Body of pancreas (tissue), 4 donors: ENCODE measurements at regions of chr11 and their contacts with region 1.

Region 1: DNA sequence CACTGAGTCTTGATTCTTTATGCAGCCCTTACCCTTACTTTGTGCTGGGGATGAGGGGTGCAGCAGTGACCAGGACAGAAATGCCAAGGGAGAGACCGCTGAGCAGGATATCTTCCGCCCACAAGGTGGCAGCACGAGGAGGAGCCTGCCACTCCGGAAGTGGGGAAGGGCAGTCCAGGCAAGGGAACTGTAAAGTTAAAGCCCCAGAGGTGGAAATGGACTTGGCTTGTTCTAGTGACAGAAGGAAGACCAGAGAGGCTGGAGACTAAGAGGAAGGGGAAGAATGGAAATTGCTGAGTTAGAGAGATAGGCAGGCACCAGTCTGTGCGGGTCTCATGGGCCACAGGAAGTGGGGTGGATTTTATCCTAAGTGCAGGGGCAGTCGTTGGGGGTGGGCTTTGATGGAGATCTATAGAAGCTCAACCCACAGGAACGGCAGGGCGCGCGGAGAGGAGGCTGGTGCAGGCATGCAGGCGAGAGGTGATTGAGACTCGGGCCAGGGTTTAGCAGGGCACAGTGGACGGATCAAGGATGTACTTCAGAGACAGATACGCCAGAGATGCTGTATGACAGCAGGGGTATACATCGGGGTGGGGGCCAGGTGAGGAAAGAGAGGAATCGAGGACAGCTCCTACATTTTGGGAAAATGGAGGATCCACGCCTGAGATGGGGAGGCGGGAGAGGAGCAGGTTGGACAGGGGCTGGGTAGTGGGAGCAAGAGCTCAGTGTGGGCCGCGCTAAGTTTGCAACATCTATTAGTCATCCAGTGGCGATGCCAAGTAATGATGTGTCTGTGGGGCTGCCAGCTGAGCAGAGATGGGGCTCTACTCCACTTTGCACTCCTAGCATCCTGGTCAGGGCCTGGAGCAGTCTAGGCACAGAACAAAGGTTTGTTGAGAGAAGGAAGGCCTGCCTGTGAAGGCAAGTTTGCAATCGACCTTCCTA is 3.3 kb upstream of the GRK2 start:
- DNase-seq: peak; percentile 85 to 88 (median 86)
- ATAC-seq: peak; percentile 54
- H3K4me3 ChIP-seq: no peak overlapping the region
- H3K27ac ChIP-seq: peak overlapping the region in 3 of 4 donors; percentile 13 to 57 (median 46)
- H3K4me1 ChIP-seq: peaks cover 33% of the 10 kb centered on the region
- H3K27me3 ChIP-seq: no peaks in the 10 kb centered on the region
- CTCF ChIP-seq: peak; percentile 76 to 92 (median 88)
- POLR2A ChIP-seq: peak in 1 of 3 donors; percentile 29

Region 2: DNA sequence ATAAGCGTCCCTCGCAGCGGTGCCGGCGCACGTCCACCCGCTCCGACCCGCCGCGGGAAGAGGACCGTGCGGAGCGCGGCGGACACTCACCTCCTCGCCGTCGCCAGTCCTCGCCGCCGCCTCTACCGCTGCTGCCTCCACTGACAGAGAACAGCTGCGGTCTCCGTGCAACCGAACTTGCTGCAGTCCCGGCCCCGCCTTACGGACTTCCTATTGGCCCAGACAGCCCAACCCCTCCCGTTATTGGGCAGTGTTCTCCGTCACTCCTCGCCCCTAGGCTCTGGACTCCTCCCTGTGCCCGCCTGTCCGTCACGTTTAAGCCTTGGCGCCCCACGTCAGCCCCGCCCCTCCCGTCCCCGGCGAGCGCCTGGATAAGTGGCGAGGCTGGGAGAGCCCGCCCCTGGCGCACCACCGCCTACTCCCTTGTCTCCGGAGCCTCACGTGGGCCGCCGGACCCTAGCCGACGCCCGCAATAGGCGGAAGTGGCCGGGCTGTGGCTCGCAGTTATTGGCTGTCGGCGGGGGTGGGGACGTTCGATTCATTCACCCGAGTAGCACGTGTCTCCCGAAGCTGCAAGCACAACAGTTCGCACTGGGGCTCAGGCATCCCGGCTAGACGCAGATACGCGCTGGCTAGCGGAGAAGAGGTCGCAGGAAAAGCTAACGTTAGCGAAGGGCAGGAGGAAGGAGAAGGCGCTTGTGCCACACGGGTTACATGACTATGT is 304.6 kb before region 1 on chr11 and contains the start of gene PC:
- intact Hi-C with region 1: no loop called
- DNase-seq: peak; percentile 99 to 100 (median 99)
- ATAC-seq: peak; percentile 96
- H3K4me3 ChIP-seq: no peak within 1 kb of the TSS
- H3K27ac ChIP-seq: peak within 1 kb of the TSS in 3 of 4 donors; percentile 33 to 84 (median 80)
- H3K4me1 ChIP-seq: peaks cover 24% of the 10 kb centered on the region
- H3K27me3 ChIP-seq: no peaks in the 10 kb centered on the region
- CTCF ChIP-seq: no peak
- POLR2A ChIP-seq: peak; percentile 75 to 90 (median 89)
- total RNA-seq, gene PC: 12.2 to 81.7 TPM

Region 3: DNA sequence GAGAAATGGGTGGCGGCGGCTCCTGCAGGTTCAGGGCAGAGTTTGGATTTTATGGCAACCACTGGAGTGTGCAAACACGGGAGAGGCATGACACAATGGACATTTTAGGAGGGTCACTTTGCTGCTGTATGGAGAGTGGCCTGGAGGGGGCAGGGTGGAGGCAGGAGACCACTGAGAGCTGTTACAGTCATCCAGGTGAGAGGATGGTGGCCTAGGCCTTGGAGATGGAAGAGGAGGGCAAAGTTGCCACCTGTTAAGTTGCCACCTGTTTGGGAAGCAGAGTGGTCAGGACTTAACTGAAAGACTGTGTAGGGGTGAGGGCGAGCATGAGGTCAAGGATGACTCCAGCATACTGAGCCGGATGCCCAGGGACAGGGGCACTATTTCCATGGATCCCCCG is 126.5 kb after region 1 on chr11:
- intact Hi-C with region 1: loop called (anchors 5 kb)
- DNase-seq: peak; percentile 56 to 73 (median 60)
- ATAC-seq: no peak
- H3K4me3 ChIP-seq: no peak overlapping the region
- H3K27ac ChIP-seq: no peak overlapping the region
- H3K4me1 ChIP-seq: peaks cover 23% of the 10 kb centered on the region
- H3K27me3 ChIP-seq: no peaks in the 10 kb centered on the region
- CTCF ChIP-seq: peak in 6 of 7 experiments; percentile 36 to 62 (median 54)
- POLR2A ChIP-seq: no peak